Body of pancreas (tissue), 4 donors: ENCODE measurements at regions of chr4 and their contacts with region 1.

Region 1: GRCh38 chr4:174217273-174218126 is 66.0 kb downstream of the FBXO8 start:
- DNase-seq: peak; percentile 19 to 42 (median 30)
- ATAC-seq: peak; percentile 20
- H3K4me3 ChIP-seq: peak overlapping the region in 1 of 2 donors; percentile 8
- H3K27ac ChIP-seq: peak overlapping the region in 1 of 4 donors; percentile 20
- H3K4me1 ChIP-seq: peaks cover 29% of the 10 kb centered on the region
- H3K27me3 ChIP-seq: peaks cover 0 to 41% of the 10 kb centered on the region in 2 donors
- CTCF ChIP-seq: no peak
- POLR2A ChIP-seq: no peak

Region 2: GRCh38 chr4:174324725-174325124 is 107.2 kb after region 1 on chr4:
- intact Hi-C with region 1: loop called (anchors 10 kb)
- DNase-seq: no peak
- ATAC-seq: no peak
- H3K4me3 ChIP-seq: no peak overlapping the region
- H3K27ac ChIP-seq: no peak overlapping the region
- H3K4me1 ChIP-seq: no peaks in the 10 kb centered on the region
- H3K27me3 ChIP-seq: no peaks in the 10 kb centered on the region
- CTCF ChIP-seq: no peak
- POLR2A ChIP-seq: no peak